PC-9 (cell line): ENCODE measurements at regions of chr5 and their contacts with region 1.

Region 1: DNA sequence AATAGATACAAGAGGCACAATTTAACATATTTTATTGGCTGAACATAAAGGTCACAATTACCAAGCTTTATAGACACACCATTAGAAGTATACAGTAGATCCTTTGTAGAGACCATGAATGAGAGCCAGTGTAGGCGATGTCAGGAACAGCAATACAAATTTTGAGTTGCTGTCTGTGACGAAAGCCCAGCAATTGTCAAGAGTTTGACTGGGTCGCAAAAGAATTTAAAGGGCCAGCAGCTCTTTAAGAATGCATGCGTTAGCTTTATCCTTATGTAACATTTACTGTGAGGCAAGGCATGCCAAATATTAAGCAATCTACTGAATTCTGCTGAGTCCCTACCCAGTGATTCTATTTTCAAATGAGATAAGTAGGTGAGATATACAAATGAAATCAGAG is 236.9 kb downstream of the ARRDC3 start:
- DNase-seq: no peak
- H3K4me3 ChIP-seq: no peak overlapping the region
- H3K27ac ChIP-seq: no peak overlapping the region
- H3K4me1 ChIP-seq: peaks cover 12% of the 10 kb centered on the region
- H3K27me3 ChIP-seq: no peaks in the 10 kb centered on the region
- CTCF ChIP-seq: no peak

Region 2: GRCh38 chr5:90983148-90983547 is 163.1 kb before region 1 on chr5:
- CTCF ChIA-PET with region 1: interaction called, 18 read pairs
- POLR2A ChIA-PET with region 1: no interaction called
- intact Hi-C with region 1: no loop called
- DNase-seq: peak; percentile 11 to 74
- H3K4me3 ChIP-seq: no peak overlapping the region
- H3K27ac ChIP-seq: no peak overlapping the region
- H3K4me1 ChIP-seq: peaks cover 17% of the 10 kb centered on the region; the same call in 1 of the 2 replicates
- H3K27me3 ChIP-seq: no peaks in the 10 kb centered on the region
- CTCF ChIP-seq: no peak

Region 3: GRCh38 chr5:91419571-91420537 is 273.6 kb after region 1 on chr5:
- CTCF ChIA-PET with region 1: no interaction called
- POLR2A ChIA-PET with region 1: no interaction called
- intact Hi-C with region 1: no loop called
- DNase-seq: peak; percentile 53 to 68
- H3K4me3 ChIP-seq: no peak overlapping the region
- H3K27ac ChIP-seq: no peak overlapping the region
- H3K4me1 ChIP-seq: no peaks in the 10 kb centered on the region
- H3K27me3 ChIP-seq: no peaks in the 10 kb centered on the region
- CTCF ChIP-seq: peak; percentile 87